GM10248 (cell line): ENCODE measurements at regions of chr2 and their contacts with region 1.

Region 1: GRCh38 chr2:178914259-178914849 is 107.1 kb upstream of the TTN start:
- DNase-seq: peak; percentile 61
- CTCF ChIP-seq: peak; percentile 81

Region 2: GRCh38 chr2:178891265-178891958 is 22.9 kb before region 1 on chr2:
- CTCF ChIA-PET with region 1: interaction called, 31 read pairs
- POLR2A ChIA-PET with region 1: no interaction called
- DNase-seq: peak; percentile 34
- CTCF ChIP-seq: peak; percentile 84

Region 3: GRCh38 chr2:178899656-178900055 is 14.7 kb before region 1 on chr2:
- CTCF ChIA-PET with region 1: interaction called, 18 read pairs
- POLR2A ChIA-PET with region 1: no interaction called
- DNase-seq: no peak
- CTCF ChIP-seq: no peak

Region 4: GRCh38 chr2:178928077-178928476 is 13.7 kb after region 1 on chr2:
- CTCF ChIA-PET with region 1: interaction called, 18 read pairs
- POLR2A ChIA-PET with region 1: no interaction called
- DNase-seq: peak; percentile 25
- CTCF ChIP-seq: no peak

Region 5: GRCh38 chr2:178933493-178933892 is 19.1 kb after region 1 on chr2:
- CTCF ChIA-PET with region 1: interaction called, 10 read pairs
- POLR2A ChIA-PET with region 1: no interaction called
- DNase-seq: no peak
- CTCF ChIP-seq: no peak